ENCODE measurements at regions of chr18 and their contacts with region 1.

Region 1: DNA sequence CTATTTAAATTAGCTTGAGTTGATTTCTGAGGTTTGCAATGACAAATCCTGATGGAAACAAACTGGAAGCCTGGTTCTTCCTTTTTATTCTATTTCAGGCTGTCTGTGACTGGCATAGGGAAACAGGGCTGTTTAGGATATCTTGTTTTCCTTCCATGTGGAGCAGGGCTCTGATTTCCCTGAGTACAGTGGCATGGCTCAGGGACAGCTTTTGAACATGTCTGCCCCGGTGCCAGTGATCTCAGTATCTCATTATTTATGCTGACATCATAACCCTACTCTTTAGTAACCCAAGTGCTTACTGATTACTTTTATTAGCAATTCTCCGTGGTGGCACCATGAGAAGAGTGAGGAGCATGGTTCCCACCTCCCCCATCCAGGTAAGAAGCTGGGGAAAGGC is 720.3 kb downstream of the GALR1 start:
- DNase-seq: no peak
- H3K4me3 Mint-ChIP-seq: no peak overlapping the region
- H3K27ac Mint-ChIP-seq: no peak overlapping the region
- H3K4me1 Mint-ChIP-seq: no peaks in the 10 kb centered on the region
- H3K27me3 Mint-ChIP-seq: no peaks in the 10 kb centered on the region
- CTCF ChIP-seq: no peak

Region 2: GRCh38 chr18:77376043-77376732 is 593.8 kb before region 1 on chr18:
- CTCF ChIA-PET with region 1: no interaction called
- intact Hi-C with region 1: loop called (anchors 5 kb)
- DNase-seq: no peak
- H3K4me3 Mint-ChIP-seq: no peak overlapping the region
- H3K27ac Mint-ChIP-seq: no peak overlapping the region
- H3K4me1 Mint-ChIP-seq: no peaks in the 10 kb centered on the region
- H3K27me3 Mint-ChIP-seq: peaks cover 32% of the 10 kb centered on the region
- CTCF ChIP-seq: no peak

Region 3: DNA sequence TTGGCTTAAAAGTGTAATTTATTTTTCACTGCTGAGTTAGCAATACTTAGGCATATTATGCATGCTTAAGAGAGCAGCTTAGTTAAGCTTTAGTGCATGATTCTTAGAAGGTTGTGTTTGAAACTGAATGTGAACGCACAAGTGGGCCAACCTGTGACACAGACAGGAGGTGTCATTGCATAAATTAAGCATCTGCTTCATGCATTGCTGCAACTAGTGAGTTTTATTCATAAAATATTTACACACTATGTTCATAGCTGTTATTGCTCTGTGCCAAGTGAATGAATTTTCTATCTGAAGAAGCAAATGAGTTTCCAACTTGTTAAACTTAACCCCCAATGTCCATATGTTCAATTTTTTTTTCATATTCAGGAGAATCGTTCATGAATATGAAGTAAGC is 86.0 kb after region 1 on chr18:
- CTCF ChIA-PET with region 1: no interaction called
- intact Hi-C with region 1: no loop called
- DNase-seq: no peak
- H3K4me3 Mint-ChIP-seq: no peak overlapping the region
- H3K27ac Mint-ChIP-seq: no peak overlapping the region
- H3K4me1 Mint-ChIP-seq: no peaks in the 10 kb centered on the region
- H3K27me3 Mint-ChIP-seq: no peaks in the 10 kb centered on the region
- CTCF ChIP-seq: no peak

Measured in Calu3 (cell line).